ENCODE measurements at regions of chr12 and their contacts with region 1.

Region 1: GRCh38 chr12:54126696-54127537 is 61.9 kb downstream of the SMUG1 start:
- DNase-seq: no peak
- H3K4me3 Mint-ChIP-seq: no peak overlapping the region
- H3K27ac Mint-ChIP-seq: no peak overlapping the region
- H3K4me1 Mint-ChIP-seq: peaks cover 7% of the 10 kb centered on the region
- H3K27me3 Mint-ChIP-seq: peaks cover 69% of the 10 kb centered on the region

Region 2: DNA sequence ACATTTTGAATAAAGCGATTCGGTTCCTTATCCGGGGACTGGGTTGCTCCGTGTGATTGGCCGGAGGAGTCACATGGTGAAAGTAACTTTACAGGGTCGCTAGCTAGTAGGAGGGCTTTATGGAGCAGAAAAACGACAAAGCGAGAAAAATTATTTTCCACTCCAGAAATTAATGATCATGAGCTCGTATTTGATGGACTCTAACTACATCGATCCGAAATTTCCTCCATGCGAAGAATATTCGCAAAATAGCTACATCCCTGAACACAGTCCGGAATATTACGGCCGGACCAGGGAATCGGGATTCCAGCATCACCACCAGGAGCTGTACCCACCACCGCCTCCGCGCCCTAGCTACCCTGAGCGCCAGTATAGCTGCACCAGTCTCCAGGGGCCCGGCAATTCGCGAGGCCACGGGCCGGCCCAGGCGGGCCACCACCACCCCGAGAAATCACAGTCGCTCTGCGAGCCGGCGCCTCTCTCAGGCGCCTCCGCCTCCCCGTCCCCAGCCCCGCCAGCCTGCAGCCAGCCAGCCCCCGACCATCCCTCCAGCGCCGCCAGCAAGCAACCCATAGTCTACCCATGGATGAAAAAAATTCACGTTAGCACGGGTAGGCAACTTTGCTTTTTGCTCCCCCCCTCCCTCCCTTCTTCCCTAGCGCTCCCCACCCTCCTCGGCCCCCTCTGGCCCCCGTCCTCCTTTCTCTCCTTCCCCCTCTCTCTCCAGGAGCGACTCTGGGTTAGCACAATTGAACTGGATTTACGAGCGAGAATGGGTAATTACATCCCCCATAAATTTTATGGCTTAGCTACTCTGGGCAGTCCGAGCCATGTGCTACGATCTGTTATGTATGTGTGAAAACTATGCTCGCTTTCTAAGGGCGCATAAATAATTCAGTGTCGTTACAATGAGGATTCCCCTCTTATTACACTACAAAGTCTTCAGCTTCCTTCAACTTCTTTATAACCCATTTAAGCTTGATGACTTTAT is 72.9 kb before region 1 on chr12 and contains the start of gene HOXC4:
- intact Hi-C with region 1: loop called (anchors 5 kb)
- DNase-seq: no peak
- H3K4me3 Mint-ChIP-seq: peak within 1 kb of the TSS; percentile 57
- H3K27ac Mint-ChIP-seq: no peak within 1 kb of the TSS
- H3K4me1 Mint-ChIP-seq: peaks cover 18% of the 10 kb centered on the region
- H3K27me3 Mint-ChIP-seq: peaks cover 89% of the 10 kb centered on the region
- total RNA-seq, gene HOXC4: not detected in 2 replicates

Region 3: GRCh38 chr12:54324617-54325441 is 197.9 kb after region 1 on chr12 and contains the start of gene COPZ1:
- intact Hi-C with region 1: no loop called
- DNase-seq: peak; percentile 91
- H3K4me3 Mint-ChIP-seq: peak within 1 kb of the TSS; percentile 99
- H3K27ac Mint-ChIP-seq: peak within 1 kb of the TSS; percentile 86
- H3K4me1 Mint-ChIP-seq: peaks cover 33% of the 10 kb centered on the region
- H3K27me3 Mint-ChIP-seq: peaks cover 5% of the 10 kb centered on the region
- total RNA-seq, gene COPZ1: 115 and 123 TPM in 2 replicates

Measured in activated T-helper 1 cell treated with anti-CD3 and anti-CD28 coated beads, Interleukin-12 subunit alpha, Interleukin-12 subunit beta, Interleukin-2, Interleukin-4 antibody, amounts not matched to agents 30 ng/mL and 10 ng/mL and 1 ng/mL, durations not matched to agents 14 hours and 24 hours and 36 hours (primary cell).